H1 (cell line): ENCODE measurements at regions of chr11 and their contacts with region 1.

Region 1: GRCh38 chr11:103108933-103109817 is at the start of gene DYNC2H1:
- DNase-seq: peak; percentile 84 to 89
- H3K4me3 ChIP-seq: peak within 1 kb of the TSS; percentile 76 to 88 (median 84)
- H3K27ac ChIP-seq: no peak within 1 kb of the TSS
- H3K4me1 ChIP-seq: no peaks in the 10 kb centered on the region
- H3K27me3 ChIP-seq: no peaks in the 10 kb centered on the region
- CTCF ChIP-seq: peak; percentile 30 to 42 (median 35); a peak in 3 of 4 replicates
- EP300 ChIP-seq: no peak
- POLR2A ChIP-seq: peak in 1 of 2 experiments; percentile 52; a peak in 2 of 3 replicates
- RAD21 ChIP-seq: peak in 1 of 2 experiments; percentile 19; a peak in 1 of 4 replicates
- total RNA-seq, gene DYNC2H1: 12.0 and 12.7 TPM in 2 replicates

Region 2: GRCh38 chr11:103091801-103092524 is 17.2 kb before region 1 on chr11 and contains the start of gene DCUN1D5:
- CTCF ChIA-PET with region 1: interaction called, 13 read pairs
- POLR2A ChIA-PET with region 1: interaction called, 30 read pairs
- DNase-seq: peak; percentile 91 to 96
- H3K4me3 ChIP-seq: peak within 1 kb of the TSS; percentile 73 to 100 (median 98)
- H3K27ac ChIP-seq: peak within 1 kb of the TSS; percentile 93
- H3K4me1 ChIP-seq: no peaks in the 10 kb centered on the region
- H3K27me3 ChIP-seq: no peaks in the 10 kb centered on the region
- CTCF ChIP-seq: no peak
- EP300 ChIP-seq: no peak
- POLR2A ChIP-seq: peak; percentile 86 to 96
- RAD21 ChIP-seq: no peak
- total RNA-seq, gene DCUN1D5: 95.4 and 95.8 TPM in 2 replicates

Region 3: DNA sequence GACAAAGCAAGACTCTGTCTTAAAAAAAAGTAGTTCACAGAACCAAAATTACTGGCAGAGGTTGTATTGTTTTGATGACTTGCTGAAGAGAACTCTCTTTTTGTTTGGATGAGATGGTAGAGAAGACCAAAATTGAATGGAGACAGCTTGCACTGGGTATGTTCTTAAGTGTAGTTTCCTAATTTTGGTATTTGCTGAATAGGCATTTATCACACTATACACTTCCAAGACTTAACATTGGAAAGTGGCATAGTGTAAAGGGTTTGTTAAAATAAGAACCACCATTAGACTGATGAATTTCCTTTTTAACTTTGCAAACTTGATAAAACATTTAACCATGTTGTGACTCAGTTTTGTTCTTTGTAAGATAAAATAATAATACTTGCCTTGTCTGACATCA is 11.9 kb before region 1 on chr11:
- CTCF ChIA-PET with region 1: interaction called, 10 read pairs
- POLR2A ChIA-PET with region 1: interaction called, 30 read pairs
- DNase-seq: no peak
- H3K4me3 ChIP-seq: no peak overlapping the region
- H3K27ac ChIP-seq: no peak overlapping the region
- H3K4me1 ChIP-seq: peaks cover 0 to 2% (median 0%) of the 10 kb centered on the region in 4 experiments; a peak in 1 of 7 replicates
- H3K27me3 ChIP-seq: no peaks in the 10 kb centered on the region; a peak in 1 of 7 replicates
- CTCF ChIP-seq: no peak
- EP300 ChIP-seq: no peak
- POLR2A ChIP-seq: no peak
- RAD21 ChIP-seq: no peak